ENCODE measurements at regions of chr9 and their contacts with region 1.

Region 1: GRCh38 chr9:126301985-126302603 is 24.5 kb upstream of the MVB12B start:
- DNase-seq: peak; percentile 65 to 84
- H3K4me3 ChIP-seq: no peak overlapping the region
- H3K27ac ChIP-seq: no peak overlapping the region
- H3K4me1 ChIP-seq: no peaks in the 10 kb centered on the region
- H3K27me3 ChIP-seq: no peaks in the 10 kb centered on the region
- CTCF ChIP-seq: peak in 5 of 7 experiments; percentile 45 to 67 (median 59)
- EP300 ChIP-seq: no peak
- POLR2A ChIP-seq: no peak

Region 2: GRCh38 chr9:126398403-126399058 is 96.4 kb after region 1 on chr9:
- intact Hi-C with region 1: loop called (anchors 5 kb)
- DNase-seq: peak; percentile 88 to 91
- H3K4me3 ChIP-seq: no peak overlapping the region
- H3K27ac ChIP-seq: peak overlapping the region in 3 of 5 donors; percentile 39 to 53 (median 46)
- H3K4me1 ChIP-seq: peaks cover 11 to 42% (median 29%) of the 10 kb centered on the region in 4 donors
- H3K27me3 ChIP-seq: no peaks in the 10 kb centered on the region
- CTCF ChIP-seq: peak in 5 of 7 experiments; percentile 87 to 98 (median 95)
- EP300 ChIP-seq: no peak
- POLR2A ChIP-seq: no peak

Region 3: DNA sequence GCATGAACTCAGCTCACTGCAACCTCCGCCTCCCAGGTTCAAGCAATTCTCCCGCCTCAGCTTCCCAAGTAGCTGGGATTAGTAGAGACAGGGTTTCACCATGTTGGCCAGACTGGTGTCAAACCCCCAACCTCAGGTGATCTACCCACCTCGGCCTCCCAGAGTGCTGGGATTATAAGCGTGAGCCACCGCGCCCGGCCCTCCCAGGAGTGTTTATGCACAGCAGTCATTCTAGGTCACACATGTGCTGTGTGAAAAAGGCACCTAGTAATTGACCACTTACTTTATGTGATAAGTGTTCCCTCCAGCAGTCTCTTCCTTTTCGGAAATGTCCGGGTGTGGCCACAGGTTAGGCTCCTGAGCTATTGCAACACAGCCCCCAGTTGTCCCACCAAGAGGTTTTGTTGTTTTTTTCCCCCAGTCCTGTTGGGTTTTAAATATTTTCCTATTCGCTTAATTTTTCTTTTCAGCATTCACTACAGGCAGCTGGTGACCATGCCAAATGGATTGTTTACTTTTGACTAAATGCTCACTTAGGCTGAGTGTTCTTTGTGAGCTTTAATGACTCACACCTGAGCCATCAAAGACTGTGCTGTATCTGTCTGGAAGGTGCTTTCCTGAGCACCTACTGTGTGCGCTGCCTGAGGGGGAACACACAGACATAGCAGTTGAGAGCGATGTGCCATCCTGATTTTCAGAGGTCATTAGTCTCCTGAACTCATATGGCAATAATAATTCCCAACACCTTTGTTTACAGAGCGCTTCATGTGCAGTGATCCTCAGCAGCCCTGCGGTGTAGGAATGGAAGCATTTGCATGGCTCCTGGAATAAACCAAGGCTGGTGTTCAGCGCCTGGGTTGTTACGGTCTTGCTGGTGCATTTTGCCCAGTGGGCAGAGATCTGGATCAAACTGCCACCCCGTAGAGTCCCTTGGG is 118.8 kb after region 1 on chr9:
- intact Hi-C with region 1: no loop called
- DNase-seq: peak in 1 of 2 donors; percentile 55
- H3K4me3 ChIP-seq: no peak overlapping the region
- H3K27ac ChIP-seq: no peak overlapping the region
- H3K4me1 ChIP-seq: peaks cover 0 to 14% (median 7%) of the 10 kb centered on the region in 4 donors
- H3K27me3 ChIP-seq: no peaks in the 10 kb centered on the region
- CTCF ChIP-seq: no peak
- EP300 ChIP-seq: no peak
- POLR2A ChIP-seq: no peak

Region 4: DNA sequence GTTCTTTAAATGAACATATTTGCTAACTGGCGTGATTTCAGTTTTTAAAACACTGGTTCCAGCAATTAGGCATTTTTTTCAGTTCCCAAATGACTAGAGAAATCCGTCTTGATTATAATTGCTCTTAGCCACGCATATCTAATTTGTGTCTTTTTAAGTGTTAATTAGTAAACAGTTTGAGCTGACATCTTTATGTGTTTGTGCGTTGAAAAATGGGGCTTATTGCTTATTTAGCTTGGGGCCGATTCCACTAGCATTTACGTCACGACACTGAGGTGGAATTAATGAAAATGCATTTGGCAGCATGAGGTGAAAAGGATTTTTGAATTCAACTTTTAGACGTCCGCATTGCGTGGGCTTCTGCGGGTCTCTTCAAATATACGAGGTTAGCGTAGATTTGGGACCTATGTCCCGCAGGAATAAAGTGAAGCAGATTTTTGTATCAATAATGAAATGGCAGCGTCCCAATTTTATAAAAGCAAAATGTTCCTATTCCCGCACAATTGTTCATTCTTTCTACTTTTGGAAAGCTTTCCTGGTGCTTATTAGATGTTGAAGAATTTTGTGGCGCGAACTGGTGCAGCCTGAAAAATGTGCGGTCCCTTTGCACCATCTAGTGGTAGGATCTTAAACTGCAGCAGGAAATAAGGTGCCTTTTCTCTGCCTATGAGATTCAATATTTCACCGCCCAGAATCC is 188.9 kb after region 1 on chr9:
- intact Hi-C with region 1: loop called (anchors 10 kb)
- DNase-seq: peak; percentile 52 to 90
- H3K4me3 ChIP-seq: no peak overlapping the region
- H3K27ac ChIP-seq: no peak overlapping the region
- H3K4me1 ChIP-seq: peaks cover 0 to 19% (median 6%) of the 10 kb centered on the region in 4 donors
- H3K27me3 ChIP-seq: no peaks in the 10 kb centered on the region
- CTCF ChIP-seq: peak in 5 of 7 experiments; percentile 82 to 95 (median 93)
- EP300 ChIP-seq: no peak
- POLR2A ChIP-seq: no peak

Measured in stomach (tissue), 19 donors.